Posterior vena cava (tissue), 2 donors: ENCODE measurements at regions of chr18 and their contacts with region 1.

Region 1: GRCh38 chr18:5611221-5611620 is 67.4 kb upstream of the EPB41L3 start:
- DNase-seq: no peak

Region 2: DNA sequence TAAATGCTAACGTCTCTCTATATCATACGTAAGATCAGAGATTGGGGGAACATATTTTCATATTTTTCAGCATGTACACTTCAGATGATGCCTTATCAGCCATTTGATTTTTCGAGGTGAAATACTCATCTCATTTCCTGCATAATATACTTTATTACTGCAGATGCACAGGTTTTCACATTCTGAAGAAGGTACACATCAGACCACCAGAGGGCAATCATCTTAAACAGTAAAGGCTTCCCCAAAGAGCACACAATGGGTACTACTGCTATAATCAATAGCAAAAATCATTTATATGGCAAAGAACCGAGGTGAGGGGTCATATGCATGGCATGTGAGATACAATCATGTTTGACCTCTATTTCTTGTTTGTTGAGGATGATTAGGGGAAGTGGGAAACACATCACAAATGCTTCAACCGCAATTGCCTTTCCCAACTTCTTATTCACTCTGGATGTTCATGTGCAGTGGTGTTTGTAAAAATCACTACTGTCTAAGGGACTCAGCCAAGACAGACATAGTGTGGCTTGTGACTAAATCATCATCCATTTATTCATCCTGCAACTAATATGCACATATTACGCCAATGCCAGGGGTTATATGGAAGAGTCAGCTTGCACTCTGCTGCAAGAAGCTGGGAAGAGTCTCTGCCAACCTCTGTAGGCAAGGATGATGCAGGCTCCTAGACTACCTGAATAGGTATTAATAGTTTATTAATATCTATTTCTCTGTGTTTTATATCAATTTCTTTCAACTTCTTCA is 186.1 kb before region 1 on chr18:
- intact Hi-C with region 1: no loop called
- DNase-seq: no peak

Region 3: DNA sequence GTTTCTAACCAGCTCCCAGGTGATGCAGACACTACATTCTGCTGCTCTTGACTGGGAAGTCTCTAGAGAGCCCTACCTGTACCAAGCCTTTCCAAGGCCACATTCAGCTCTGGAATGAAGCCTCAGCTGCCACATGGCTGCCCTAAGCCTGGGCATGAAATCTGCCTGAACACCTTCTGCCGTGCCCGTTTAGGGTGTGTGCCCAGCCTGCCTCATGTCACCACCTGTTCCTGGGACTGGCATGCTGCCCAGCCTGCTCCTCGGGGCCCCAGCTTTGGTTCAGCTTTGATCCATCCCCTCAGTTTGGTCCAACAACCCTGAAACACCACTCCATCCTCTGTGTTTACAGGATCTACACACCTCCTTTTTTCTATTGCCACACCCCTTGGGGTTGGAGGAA is 592.6 kb after region 1 on chr18:
- intact Hi-C with region 1: loop called in 1 of 2 experiments (anchors 5 kb)
- DNase-seq: no peak